Adrenal gland (tissue), 19 donors: ENCODE measurements at regions of chr7 and their contacts with region 1.

Region 1: DNA sequence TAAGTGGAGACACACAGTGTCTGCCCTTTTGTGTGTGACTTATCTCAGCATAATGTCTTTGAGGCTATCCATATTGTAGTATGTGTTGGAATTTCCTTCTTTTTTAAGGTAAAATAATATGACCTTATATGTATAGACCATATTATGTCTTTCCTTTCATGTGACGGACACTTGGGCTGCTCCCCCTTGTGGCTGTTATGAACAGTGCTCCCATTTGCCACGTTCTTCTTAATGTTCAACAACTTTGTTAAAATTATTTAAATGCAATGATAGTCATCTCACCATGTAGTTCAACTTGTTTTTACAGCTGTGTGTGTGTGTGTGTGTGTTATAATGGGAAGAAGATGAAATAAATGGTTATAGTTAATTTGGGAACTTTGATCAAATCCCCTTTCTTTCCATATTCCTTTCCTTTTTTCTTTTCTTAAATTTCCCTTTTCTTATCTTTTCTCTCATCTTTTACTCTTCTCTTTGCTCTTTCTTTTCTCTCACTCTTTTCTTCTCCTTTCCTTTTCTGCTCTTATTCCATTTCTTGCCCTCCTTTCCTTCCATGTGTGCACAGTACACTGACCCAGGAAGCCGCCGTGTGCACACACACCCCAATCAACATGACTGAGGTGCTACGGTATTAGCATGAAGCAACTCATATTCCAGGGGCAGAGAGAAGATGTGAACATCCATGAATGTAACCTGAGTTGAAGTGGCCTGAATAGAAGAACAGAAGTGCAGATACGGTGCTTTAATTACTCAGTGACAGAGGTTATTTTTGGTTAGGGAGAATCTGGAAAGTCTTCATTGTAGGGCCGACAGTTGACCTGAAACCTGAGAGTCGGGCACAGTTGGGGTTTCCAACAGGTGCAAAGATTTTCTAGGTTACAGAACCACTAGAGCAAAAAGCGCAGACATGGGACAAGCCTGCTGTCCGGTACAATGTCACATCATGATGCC is 596.7 kb downstream of the SDK1 start:
- DNase-seq: peak in 4 of 7 donors; percentile 33 to 69 (median 46)
- H3K4me3 ChIP-seq: no peak overlapping the region
- H3K27ac ChIP-seq: no peak overlapping the region
- H3K4me1 ChIP-seq: no peaks in the 10 kb centered on the region
- H3K27me3 ChIP-seq: no peaks in the 10 kb centered on the region
- CTCF ChIP-seq: peak; percentile 50 to 84 (median 74)
- POLR2A ChIP-seq: no peak

Region 2: GRCh38 chr7:2863461-2864066 is 1034.1 kb before region 1 on chr7:
- intact Hi-C with region 1: loop called in 1 of 2 experiments (anchors 2 kb)
- DNase-seq: peak; percentile 72 to 95 (median 92)
- H3K4me3 ChIP-seq: peak overlapping the region in 1 of 4 donors; percentile 42
- H3K27ac ChIP-seq: peak overlapping the region; percentile 92 to 99 (median 95)
- H3K4me1 ChIP-seq: peaks cover 21 to 27% of the 10 kb centered on the region in 2 donors
- H3K27me3 ChIP-seq: no peaks in the 10 kb centered on the region
- CTCF ChIP-seq: peak in 2 of 6 experiments; percentile 20
- POLR2A ChIP-seq: peak; percentile 81 to 85

Region 3: DNA sequence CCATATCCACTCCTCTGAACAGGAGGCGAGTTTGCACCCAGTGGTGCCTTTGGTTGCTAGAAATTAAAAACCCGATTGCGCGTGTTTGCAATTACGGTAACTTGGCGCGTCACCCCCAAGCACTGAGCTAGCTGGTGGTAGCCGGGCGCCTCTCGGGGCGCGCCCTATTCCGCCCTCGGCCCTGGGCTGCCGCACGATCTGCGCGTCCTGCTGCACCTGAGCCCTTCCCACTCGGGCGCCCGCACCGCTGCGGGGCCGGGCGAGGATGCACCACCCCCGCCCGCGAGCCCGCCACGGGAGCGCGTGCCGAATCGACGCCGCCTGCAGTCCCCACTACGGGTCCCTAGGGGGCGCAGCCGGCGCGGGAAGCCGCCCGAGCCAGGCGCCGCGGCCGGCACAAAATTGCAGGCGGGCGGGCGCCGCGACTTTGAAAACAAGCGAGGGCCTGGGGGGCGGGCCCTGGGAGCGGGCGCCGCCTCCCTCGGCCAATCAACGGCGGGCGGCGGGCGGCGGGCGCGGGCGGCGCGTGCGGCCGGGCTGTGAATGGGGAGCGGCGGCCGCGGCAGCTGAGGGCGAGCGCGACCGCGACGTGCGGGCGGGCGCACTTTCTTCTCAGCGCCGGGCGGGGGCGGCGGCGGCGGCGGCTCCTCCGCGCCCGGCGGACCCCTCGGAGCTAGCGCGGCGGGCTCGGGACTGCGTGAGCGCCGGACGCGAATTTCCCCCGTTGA is 596.9 kb before region 1 on chr7 and contains the start of gene SDK1:
- intact Hi-C with region 1: loop called in 1 of 2 experiments (anchors 5 kb)
- DNase-seq: peak; percentile 87 to 94 (median 90)
- H3K4me3 ChIP-seq: peak within 1 kb of the TSS in 2 of 4 donors; percentile 20 to 70
- H3K27ac ChIP-seq: no peak within 1 kb of the TSS
- H3K4me1 ChIP-seq: peaks cover 12 to 13% of the 10 kb centered on the region in 2 donors
- H3K27me3 ChIP-seq: no peaks in the 10 kb centered on the region
- CTCF ChIP-seq: peak; percentile 33 to 97 (median 70)
- POLR2A ChIP-seq: no peak
- total RNA-seq, gene SDK1: 0.50 to 3.6 (median 1.6) TPM

Region 4: DNA sequence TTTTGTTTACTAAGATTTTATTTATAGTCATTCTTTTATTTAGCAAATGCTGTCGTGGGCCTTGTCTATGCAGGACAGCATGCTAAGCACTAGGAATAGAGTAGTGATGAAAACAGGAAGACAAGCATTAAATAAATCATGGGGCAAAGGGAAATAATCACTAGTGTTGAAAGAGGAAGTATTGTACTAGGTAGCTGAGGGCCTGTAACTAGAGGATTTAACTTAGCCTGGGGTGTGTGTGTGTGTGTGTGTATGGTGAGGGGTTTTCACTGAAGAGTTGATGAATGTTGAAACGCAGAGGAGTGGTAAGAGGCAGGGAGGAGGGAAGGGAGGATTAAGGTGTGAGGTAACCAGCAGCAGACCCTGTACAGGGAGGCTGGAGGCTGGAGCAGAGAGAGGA is 150.2 kb before region 1 on chr7:
- intact Hi-C with region 1: no loop called
- DNase-seq: no peak
- H3K4me3 ChIP-seq: no peak overlapping the region
- H3K27ac ChIP-seq: no peak overlapping the region
- H3K4me1 ChIP-seq: no peaks in the 10 kb centered on the region
- H3K27me3 ChIP-seq: no peaks in the 10 kb centered on the region
- CTCF ChIP-seq: no peak
- POLR2A ChIP-seq: no peak